CD8-positive, alpha-beta T cell (primary cell): ENCODE measurements at regions of chr19 and their contacts with region 1.

Region 1: GRCh38 chr19:52962394-52963246 is at the start of gene ZNF816:
- DNase-seq: peak; percentile 98 to 99 (median 99)
- ATAC-seq: peak; percentile 99
- H3K4me3 ChIP-seq: peak within 1 kb of the TSS; percentile 76 to 77
- H3K4me3 Mint-ChIP-seq: peak within 1 kb of the TSS; percentile 94
- H3K27ac ChIP-seq: peak within 1 kb of the TSS; percentile 61 to 67
- H3K27ac Mint-ChIP-seq: peak within 1 kb of the TSS; percentile 95
- H3K4me1 ChIP-seq: peaks cover 9% of the 10 kb centered on the region
- H3K4me1 Mint-ChIP-seq: peaks cover 31% of the 10 kb centered on the region
- H3K27me3 ChIP-seq: no peaks in the 10 kb centered on the region
- H3K27me3 Mint-ChIP-seq: no peaks in the 10 kb centered on the region
- CTCF ChIP-seq: no peak
- total RNA-seq, gene ZNF816: 5.9 to 6.4 TPM

Region 2: DNA sequence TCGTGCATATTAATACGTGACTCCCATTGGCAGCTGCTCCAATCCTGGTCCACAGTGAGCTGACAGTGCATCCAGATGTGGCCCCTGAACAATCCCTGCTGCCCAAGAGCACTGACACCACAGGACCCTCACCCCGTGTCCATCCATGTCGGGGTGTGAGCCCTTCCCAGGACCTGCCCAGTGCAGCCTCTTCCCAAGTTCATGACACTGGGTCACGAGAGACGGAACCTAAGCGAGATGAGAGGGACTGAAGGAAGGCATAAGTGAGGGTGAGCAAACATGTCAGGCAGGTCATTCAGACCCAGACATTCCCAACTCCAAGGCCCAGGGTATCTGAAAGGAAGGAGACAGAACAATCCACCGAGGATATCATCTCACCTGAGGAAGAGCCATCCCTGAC is 108.7 kb before region 1 on chr19:
- CTCF ChIA-PET with region 1: interaction called, 3 read pairs
- POLR2A ChIA-PET with region 1: no interaction called
- intact Hi-C with region 1: loop called (anchors 1 kb)
- DNase-seq: no peak
- ATAC-seq: no peak
- H3K4me3 ChIP-seq: no peak overlapping the region
- H3K4me3 Mint-ChIP-seq: no peak overlapping the region
- H3K27ac ChIP-seq: no peak overlapping the region
- H3K27ac Mint-ChIP-seq: no peak overlapping the region
- H3K4me1 ChIP-seq: peaks cover 5% of the 10 kb centered on the region
- H3K4me1 Mint-ChIP-seq: peaks cover 29% of the 10 kb centered on the region
- H3K27me3 ChIP-seq: no peaks in the 10 kb centered on the region
- H3K27me3 Mint-ChIP-seq: no peaks in the 10 kb centered on the region
- CTCF ChIP-seq: no peak

Region 3: GRCh38 chr19:52922841-52923777 is 39.5 kb before region 1 on chr19 and contains the start of gene ZNF888:
- CTCF ChIA-PET with region 1: no interaction called
- POLR2A ChIA-PET with region 1: no interaction called
- intact Hi-C with region 1: loop called (anchors 1 kb)
- DNase-seq: peak; percentile 74 to 90 (median 82)
- ATAC-seq: peak; percentile 100
- H3K4me3 ChIP-seq: peak within 1 kb of the TSS; percentile 93 to 97
- H3K4me3 Mint-ChIP-seq: peak within 1 kb of the TSS; percentile 94
- H3K27ac ChIP-seq: peak within 1 kb of the TSS; percentile 62 to 75
- H3K27ac Mint-ChIP-seq: peak within 1 kb of the TSS; percentile 90
- H3K4me1 ChIP-seq: peaks cover 14% of the 10 kb centered on the region
- H3K4me1 Mint-ChIP-seq: peaks cover 33% of the 10 kb centered on the region
- H3K27me3 ChIP-seq: no peaks in the 10 kb centered on the region
- H3K27me3 Mint-ChIP-seq: no peaks in the 10 kb centered on the region
- CTCF ChIP-seq: no peak
- total RNA-seq, gene ZNF888: 4.5 to 4.9 TPM

Region 4: GRCh38 chr19:52993323-52994178 is 30.9 kb after region 1 on chr19:
- CTCF ChIA-PET with region 1: no interaction called
- POLR2A ChIA-PET with region 1: no interaction called
- intact Hi-C with region 1: loop called (anchors 1 kb)
- DNase-seq: peak; percentile 64 to 84 (median 77)
- ATAC-seq: peak; percentile 96
- H3K4me3 ChIP-seq: peak overlapping the region; percentile 38 to 65
- H3K4me3 Mint-ChIP-seq: peak overlapping the region; percentile 90
- H3K27ac ChIP-seq: no peak overlapping the region
- H3K27ac Mint-ChIP-seq: peak overlapping the region; percentile 60
- H3K4me1 ChIP-seq: peaks cover 6% of the 10 kb centered on the region
- H3K4me1 Mint-ChIP-seq: peaks cover 23% of the 10 kb centered on the region
- H3K27me3 ChIP-seq: no peaks in the 10 kb centered on the region
- H3K27me3 Mint-ChIP-seq: peaks cover 4% of the 10 kb centered on the region
- CTCF ChIP-seq: peak; percentile 81

Region 5: GRCh38 chr19:53365134-53365898 is 402.7 kb after region 1 on chr19 and contains the start of gene ZNF525:
- CTCF ChIA-PET with region 1: no interaction called
- POLR2A ChIA-PET with region 1: no interaction called
- intact Hi-C with region 1: loop called (anchors 10 kb)
- DNase-seq: peak; percentile 95 to 99 (median 97)
- ATAC-seq: peak; percentile 100
- H3K4me3 ChIP-seq: peak within 1 kb of the TSS; percentile 85 to 99
- H3K4me3 Mint-ChIP-seq: peak within 1 kb of the TSS; percentile 96
- H3K27ac ChIP-seq: peak within 1 kb of the TSS; percentile 86 to 91
- H3K27ac Mint-ChIP-seq: peak within 1 kb of the TSS; percentile 99
- H3K4me1 ChIP-seq: peaks cover 9% of the 10 kb centered on the region
- H3K4me1 Mint-ChIP-seq: peaks cover 29% of the 10 kb centered on the region
- H3K27me3 ChIP-seq: no peaks in the 10 kb centered on the region
- H3K27me3 Mint-ChIP-seq: no peaks in the 10 kb centered on the region
- CTCF ChIP-seq: peak; percentile 54
- total RNA-seq, gene ZNF525: 25.6 to 26.4 TPM

Region 6: GRCh38 chr19:53467485-53468262 is 505.1 kb after region 1 on chr19 and contains the start of gene ZNF813:
- CTCF ChIA-PET with region 1: no interaction called
- POLR2A ChIA-PET with region 1: no interaction called
- intact Hi-C with region 1: loop called (anchors 1 to 10 kb)
- DNase-seq: peak; percentile 93 to 98 (median 95)
- ATAC-seq: peak; percentile 98
- H3K4me3 ChIP-seq: peak within 1 kb of the TSS; percentile 73 to 91
- H3K4me3 Mint-ChIP-seq: peak within 1 kb of the TSS; percentile 92
- H3K27ac ChIP-seq: peak within 1 kb of the TSS; percentile 64 to 79
- H3K27ac Mint-ChIP-seq: peak within 1 kb of the TSS; percentile 89
- H3K4me1 ChIP-seq: peaks cover 7% of the 10 kb centered on the region
- H3K4me1 Mint-ChIP-seq: peaks cover 26% of the 10 kb centered on the region
- H3K27me3 ChIP-seq: no peaks in the 10 kb centered on the region
- H3K27me3 Mint-ChIP-seq: peaks cover 18% of the 10 kb centered on the region
- CTCF ChIP-seq: no peak
- total RNA-seq, gene ZNF813: 3.8 TPM